ENCODE measurements at regions of chr4 and their contacts with region 1.

Region 1: GRCh38 chr4:82900331-82901128 is at the start of gene THAP9:
- DNase-seq: peak; percentile 96
- ATAC-seq: peak; percentile 99
- H3K4me3 Mint-ChIP-seq: no peak within 1 kb of the TSS
- H3K27ac Mint-ChIP-seq: no peak within 1 kb of the TSS
- H3K4me1 Mint-ChIP-seq: peaks cover 17% of the 10 kb centered on the region
- H3K27me3 Mint-ChIP-seq: no peaks in the 10 kb centered on the region
- CTCF ChIP-seq: no peak
- total RNA-seq, gene THAP9: 16.8 to 17.7 TPM (median 17.0 TPM) in 3 replicates

Region 2: DNA sequence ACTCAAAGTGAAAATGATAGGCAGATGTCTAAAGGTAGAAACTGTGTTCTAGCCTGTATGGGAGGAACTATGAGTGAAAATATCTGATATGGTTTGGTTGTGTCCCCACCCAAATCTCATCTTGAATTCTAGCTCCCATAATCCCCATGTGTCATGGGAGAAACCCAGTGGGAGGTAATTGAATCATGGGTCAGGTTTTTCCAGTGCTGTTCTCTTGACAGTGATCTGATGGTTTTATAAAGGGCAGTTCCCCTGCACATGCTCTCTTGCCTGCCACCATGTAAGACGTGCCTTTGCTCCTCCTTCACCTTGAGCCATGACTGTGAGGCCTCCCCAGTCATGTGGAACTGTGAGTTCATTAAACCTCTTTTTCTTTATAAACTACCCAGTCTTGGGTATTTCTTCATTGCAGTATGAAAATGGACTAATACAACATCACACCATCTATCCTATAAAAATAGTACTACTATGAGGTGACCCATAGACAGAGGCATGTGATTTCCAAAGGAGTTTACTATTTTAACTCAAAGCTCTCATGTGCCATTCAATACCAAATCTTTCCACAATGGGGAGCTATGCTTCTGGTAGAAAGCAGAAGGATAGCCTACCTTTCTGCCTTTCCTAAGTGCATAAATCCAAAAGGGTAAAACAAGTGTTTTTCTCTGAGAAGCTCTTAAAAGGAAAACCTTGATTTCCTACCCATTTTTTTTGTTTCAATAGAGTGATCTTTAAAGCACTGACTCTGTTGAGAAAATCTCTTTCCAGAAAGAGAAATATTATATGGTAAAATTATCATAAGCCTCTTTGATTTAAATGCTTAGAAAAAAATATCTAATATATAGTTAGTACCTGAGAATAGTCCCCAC is 48.4 kb before region 1 on chr4:
- CTCF ChIA-PET with region 1: interaction called, 10 read pairs
- POLR2A ChIA-PET with region 1: no interaction called
- DNase-seq: no peak
- ATAC-seq: peak; percentile 56; the same call in 1 of the 2 replicates
- H3K4me3 Mint-ChIP-seq: no peak overlapping the region
- H3K27ac Mint-ChIP-seq: peak overlapping the region; percentile 17; the same call in 1 of the 2 replicates
- H3K4me1 Mint-ChIP-seq: no peaks in the 10 kb centered on the region
- H3K27me3 Mint-ChIP-seq: no peaks in the 10 kb centered on the region
- CTCF ChIP-seq: no peak

Region 3: GRCh38 chr4:82918091-82918490 is 17.6 kb after region 1 on chr4:
- CTCF ChIA-PET with region 1: no interaction called
- POLR2A ChIA-PET with region 1: no interaction called
- DNase-seq: no peak
- ATAC-seq: no peak
- H3K4me3 Mint-ChIP-seq: no peak overlapping the region
- H3K27ac Mint-ChIP-seq: no peak overlapping the region
- H3K4me1 Mint-ChIP-seq: peaks cover 4% of the 10 kb centered on the region; the same call in 1 of the 2 replicates
- H3K27me3 Mint-ChIP-seq: no peaks in the 10 kb centered on the region
- CTCF ChIP-seq: no peak

Measured in WTC11 (cell line).